IMR-90 (cell line): ENCODE measurements at regions of chr5 and their contacts with region 1.

Region 1: GRCh38 chr5:75265731-75266130 is 29.1 kb upstream of the ANKRD31 start:
- DNase-seq: peak; percentile 53
- ATAC-seq: peak; percentile 68
- H3K4me3 ChIP-seq: no peak overlapping the region
- H3K27ac ChIP-seq: no peak overlapping the region
- H3K4me1 ChIP-seq: no peaks in the 10 kb centered on the region
- H3K27me3 ChIP-seq: no peaks in the 10 kb centered on the region; the same call in 1 of the 2 replicates
- CTCF ChIP-seq: peak; percentile 71
- POLR2A ChIP-seq: no peak
- RAD21 ChIP-seq: peak; percentile 71

Region 2: DNA sequence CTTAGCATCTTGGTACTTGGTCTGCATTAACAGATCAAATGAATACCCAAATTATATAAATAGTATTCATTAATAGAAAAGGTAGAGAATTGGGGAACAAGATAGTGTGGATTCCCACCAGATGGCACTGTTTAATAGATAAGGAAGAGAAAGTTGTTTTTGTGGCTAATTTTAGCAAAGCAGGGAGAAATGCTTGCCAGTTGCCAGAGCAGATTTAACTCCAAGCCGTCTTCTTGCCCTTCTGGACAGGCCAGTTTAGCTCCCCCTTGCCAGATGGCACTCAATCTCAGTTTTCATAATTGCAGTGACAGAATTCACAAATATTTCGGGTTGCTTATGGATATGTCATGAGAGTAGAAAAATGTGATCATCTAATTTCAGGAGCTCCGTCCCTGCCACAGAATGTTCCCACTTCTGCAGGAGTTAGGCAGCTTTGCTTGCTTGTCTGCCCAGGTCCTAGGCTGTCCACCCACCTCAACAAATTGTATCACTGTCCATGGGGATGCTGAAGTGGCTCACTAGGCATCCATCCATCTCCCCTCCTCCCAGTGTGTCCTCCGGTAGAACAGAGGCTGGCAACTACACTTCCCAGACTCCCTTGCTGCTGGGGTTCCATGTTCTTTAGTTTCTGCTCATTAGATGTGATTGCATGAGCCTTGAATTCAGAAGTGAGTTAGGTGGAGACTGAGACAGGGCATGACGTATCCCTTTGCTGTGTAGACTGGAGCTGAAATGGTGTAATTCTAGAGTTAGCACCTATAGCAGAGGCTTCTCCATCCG is 592.5 kb before region 1 on chr5:
- CTCF ChIA-PET with region 1: no interaction called
- POLR2A ChIA-PET with region 1: no interaction called
- dilution Hi-C with region 1: no loop called
- in situ Hi-C with region 1: loop called (anchors 25 kb)
- intact Hi-C with region 1: loop called (anchors 5 kb)
- DNase-seq: peak; percentile 67
- ATAC-seq: peak; percentile 78
- H3K4me3 ChIP-seq: no peak overlapping the region
- H3K27ac ChIP-seq: no peak overlapping the region
- H3K4me1 ChIP-seq: peaks cover 3% of the 10 kb centered on the region
- H3K27me3 ChIP-seq: peaks cover 3% of the 10 kb centered on the region; the same call in 1 of the 2 replicates
- CTCF ChIP-seq: peak; percentile 71
- POLR2A ChIP-seq: no peak
- RAD21 ChIP-seq: peak; percentile 72

Region 3: DNA sequence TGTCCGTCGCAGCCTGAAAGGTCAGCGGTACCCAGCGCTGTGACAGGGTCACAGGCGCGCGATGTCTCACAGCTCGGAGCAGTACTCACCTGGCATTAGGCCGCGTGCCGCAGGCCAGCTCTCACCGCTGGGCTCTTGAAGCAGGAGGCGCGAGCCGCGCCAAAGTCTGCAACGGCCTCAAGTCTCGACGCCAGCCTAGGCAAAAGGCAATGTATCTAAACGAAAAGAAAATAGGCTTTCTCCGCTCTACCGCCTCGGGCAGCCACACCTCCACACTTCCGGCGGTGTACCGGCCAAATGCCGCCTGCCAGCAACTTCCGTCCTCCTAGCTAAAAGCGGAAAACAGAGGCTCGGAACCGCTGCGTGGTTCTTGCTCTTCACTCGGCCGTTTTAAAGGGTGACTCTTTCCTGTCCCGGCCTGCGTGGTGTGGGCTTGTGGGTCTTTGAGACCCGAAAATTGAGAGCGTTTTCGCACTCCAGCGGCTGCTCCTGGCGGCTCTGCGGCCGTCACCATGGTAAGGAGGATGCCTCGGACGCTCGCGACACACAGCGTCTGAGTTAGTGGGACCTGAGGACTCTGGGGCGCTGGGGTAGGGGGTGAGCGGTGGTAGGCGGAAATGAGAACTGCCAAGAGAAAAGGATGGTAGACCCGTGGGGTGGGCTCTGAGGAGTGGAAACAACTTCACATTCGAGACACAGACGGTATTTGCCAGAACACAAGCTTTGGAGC is 498.7 kb before region 1 on chr5 and contains the starts of genes GFM2 and NSA2:
- CTCF ChIA-PET with region 1: no interaction called
- POLR2A ChIA-PET with region 1: no interaction called
- dilution Hi-C with region 1: no loop called
- in situ Hi-C with region 1: no loop called
- intact Hi-C with region 1: loop called (anchors 2 kb)
- DNase-seq: peak; percentile 94
- ATAC-seq: peak; percentile 94
- H3K4me3 ChIP-seq: peak within 1 kb of the TSS; percentile 82
- H3K27ac ChIP-seq: peak within 1 kb of the TSS; percentile 88
- H3K4me1 ChIP-seq: peaks cover 7% of the 10 kb centered on the region
- H3K27me3 ChIP-seq: no peaks in the 10 kb centered on the region
- CTCF ChIP-seq: no peak
- POLR2A ChIP-seq: peak; percentile 61
- RAD21 ChIP-seq: no peak
- total RNA-seq, gene GFM2: 45.7 and 61.4 TPM in 2 replicates
- total RNA-seq, gene NSA2: 5.4 and 25.6 TPM in 2 replicates

Region 4: GRCh38 chr5:74927336-74927735 is 338.4 kb before region 1 on chr5:
- CTCF ChIA-PET with region 1: no interaction called
- POLR2A ChIA-PET with region 1: no interaction called
- dilution Hi-C with region 1: no loop called
- in situ Hi-C with region 1: no loop called
- intact Hi-C with region 1: loop called (anchors 2 kb)
- DNase-seq: no peak
- ATAC-seq: no peak
- H3K4me3 ChIP-seq: no peak overlapping the region
- H3K27ac ChIP-seq: no peak overlapping the region
- H3K4me1 ChIP-seq: peaks cover 3% of the 10 kb centered on the region
- H3K27me3 ChIP-seq: no peaks in the 10 kb centered on the region
- CTCF ChIP-seq: no peak
- POLR2A ChIP-seq: no peak
- RAD21 ChIP-seq: no peak

Region 5: DNA sequence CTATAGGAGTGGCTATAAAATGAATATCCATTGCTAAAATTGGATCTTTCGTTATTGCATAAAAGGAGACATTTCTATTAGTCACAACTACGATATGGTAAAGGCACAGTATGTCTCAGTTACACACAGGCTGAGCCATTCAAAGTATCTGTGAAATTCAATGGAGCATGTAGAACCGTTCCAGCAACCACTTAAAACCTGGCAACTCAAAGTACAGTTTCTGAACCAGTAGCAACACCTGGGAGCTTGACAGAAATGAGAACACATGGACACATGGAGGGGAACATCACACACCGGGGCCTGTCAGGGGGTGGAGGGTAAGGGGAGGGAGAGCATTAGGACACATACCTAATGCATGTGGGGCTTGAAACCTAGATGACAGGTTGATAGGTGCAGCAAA is 436.1 kb after region 1 on chr5:
- CTCF ChIA-PET with region 1: no interaction called
- POLR2A ChIA-PET with region 1: no interaction called
- dilution Hi-C with region 1: no loop called
- in situ Hi-C with region 1: no loop called
- intact Hi-C with region 1: no loop called
- DNase-seq: no peak
- ATAC-seq: no peak
- H3K4me3 ChIP-seq: no peak overlapping the region
- H3K27ac ChIP-seq: no peak overlapping the region
- H3K4me1 ChIP-seq: no peaks in the 10 kb centered on the region
- H3K27me3 ChIP-seq: no peaks in the 10 kb centered on the region
- CTCF ChIP-seq: no peak
- POLR2A ChIP-seq: no peak
- RAD21 ChIP-seq: no peak